ENCODE measurements at regions of chr6 and their contacts with region 1.

Region 1: DNA sequence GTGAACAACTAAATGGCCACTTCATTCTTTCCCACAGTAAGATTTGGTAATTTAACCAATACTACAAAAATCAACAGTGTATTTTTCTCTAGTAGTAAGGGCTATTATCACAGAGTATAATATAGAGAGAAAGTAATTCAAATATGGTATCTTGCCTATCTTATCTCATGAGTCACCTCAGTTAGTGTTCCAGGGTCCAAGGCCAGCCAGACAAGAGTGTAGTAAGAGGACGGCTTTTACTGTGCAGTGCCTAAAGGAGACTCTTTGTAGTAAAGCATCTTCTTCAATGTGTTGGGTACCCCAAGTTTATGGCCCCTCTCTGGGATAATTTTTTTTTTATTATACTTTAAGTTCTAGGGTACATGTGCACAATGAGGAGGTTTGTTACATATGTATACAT is 607.4 kb downstream of the PKHD1 start:
- DNase-seq: no peak
- H3K4me3 ChIP-seq: no peak overlapping the region
- H3K27ac ChIP-seq: no peak overlapping the region
- H3K4me1 ChIP-seq: no peaks in the 10 kb centered on the region
- H3K27me3 ChIP-seq: no peaks in the 10 kb centered on the region
- CTCF ChIP-seq: no peak
- POLR2A ChIP-seq: no peak

Region 2: DNA sequence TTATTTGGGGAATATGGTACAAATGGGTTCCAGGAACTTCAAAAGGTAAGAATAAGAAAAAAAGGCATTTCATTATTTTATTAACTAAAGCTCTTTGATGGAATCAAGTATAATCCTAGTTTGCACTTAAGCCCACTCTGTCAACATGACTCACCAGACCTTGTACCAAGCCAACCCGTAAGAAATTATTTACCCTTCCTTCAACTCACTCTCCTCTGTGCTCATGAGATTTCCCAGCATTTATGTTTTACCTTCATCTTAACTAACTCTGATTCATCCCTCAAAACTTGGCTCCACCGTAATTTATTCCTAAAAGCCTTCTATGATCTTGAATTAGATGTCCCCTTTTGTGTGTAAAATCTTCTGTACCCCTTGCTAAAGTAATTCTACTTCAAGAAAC is 298.6 kb after region 1 on chr6:
- intact Hi-C with region 1: no loop called
- DNase-seq: no peak
- H3K4me3 ChIP-seq: no peak overlapping the region
- H3K27ac ChIP-seq: no peak overlapping the region
- H3K4me1 ChIP-seq: no peaks in the 10 kb centered on the region
- H3K27me3 ChIP-seq: no peaks in the 10 kb centered on the region
- CTCF ChIP-seq: no peak
- POLR2A ChIP-seq: no peak

Region 3: DNA sequence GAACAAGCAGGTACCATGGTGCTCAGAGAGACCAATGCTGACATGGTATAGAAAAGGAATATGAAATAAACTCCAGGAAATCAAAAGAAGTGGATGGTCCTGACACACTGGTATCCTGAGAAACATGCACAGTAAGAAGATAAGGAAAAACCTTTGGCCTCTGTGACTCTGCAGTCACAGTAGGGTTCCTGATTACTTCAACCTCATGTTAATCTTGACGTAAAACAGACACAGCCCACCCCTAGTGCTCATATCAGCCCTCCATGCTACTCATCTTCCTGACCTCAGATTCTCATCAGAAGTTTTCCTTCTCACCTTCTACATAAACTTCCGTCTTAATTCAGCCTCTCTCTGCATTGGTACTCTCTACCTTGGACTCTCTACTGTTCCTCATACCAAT is 366.5 kb after region 1 on chr6:
- intact Hi-C with region 1: loop called (anchors 5 kb)
- DNase-seq: no peak
- H3K4me3 ChIP-seq: no peak overlapping the region
- H3K27ac ChIP-seq: no peak overlapping the region
- H3K4me1 ChIP-seq: no peaks in the 10 kb centered on the region
- H3K27me3 ChIP-seq: no peaks in the 10 kb centered on the region
- CTCF ChIP-seq: no peak
- POLR2A ChIP-seq: no peak

Measured in breast epithelium (tissue), 4 donors.